PC-9 (cell line): ENCODE measurements at regions of chr2 and their contacts with region 1.

Region 1: DNA sequence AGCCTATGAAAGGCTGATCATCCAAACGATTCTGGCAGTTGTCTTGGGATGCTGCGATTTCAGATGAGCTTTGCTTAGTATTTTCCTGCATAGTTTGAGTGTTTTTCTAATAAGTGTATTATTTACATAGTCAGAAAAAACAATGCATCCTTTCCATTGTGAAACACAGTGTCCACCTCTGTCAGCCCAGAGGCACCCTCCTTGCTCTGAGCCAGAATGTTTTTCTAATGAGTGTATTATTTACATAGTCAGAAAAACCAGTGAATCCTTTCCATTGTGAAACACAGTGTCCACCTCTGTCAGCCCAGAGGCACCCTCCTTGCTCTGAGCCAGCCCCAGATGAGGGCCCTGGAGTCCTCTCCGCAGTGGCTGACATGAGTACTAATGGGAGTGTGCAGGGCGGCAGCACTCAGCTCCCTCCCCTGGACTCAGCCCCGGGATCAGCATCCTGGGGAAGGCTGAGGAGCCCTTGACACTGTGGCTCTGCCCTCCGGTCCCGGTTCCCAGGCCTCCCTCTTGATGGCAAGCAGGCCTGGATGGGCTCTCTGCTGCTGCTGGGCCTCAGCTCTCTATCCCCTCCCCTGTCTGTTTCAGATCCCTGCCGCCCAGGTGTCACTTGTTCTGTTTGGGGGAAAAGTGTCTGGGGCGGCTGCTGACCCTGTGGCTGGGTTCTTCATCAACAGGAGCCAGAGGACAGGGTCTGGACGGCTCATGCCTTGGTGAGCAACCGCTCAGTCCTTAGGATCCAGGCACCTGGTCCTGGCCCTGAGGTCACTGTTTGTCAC is 5.9 kb downstream of the MFSD2B start:
- DNase-seq: peak; percentile 84 to 99
- H3K4me3 ChIP-seq: no peak overlapping the region
- H3K27ac ChIP-seq: peak overlapping the region; percentile 55
- H3K4me1 ChIP-seq: peaks cover 45% of the 10 kb centered on the region
- H3K27me3 ChIP-seq: no peaks in the 10 kb centered on the region
- CTCF ChIP-seq: no peak

Region 2: DNA sequence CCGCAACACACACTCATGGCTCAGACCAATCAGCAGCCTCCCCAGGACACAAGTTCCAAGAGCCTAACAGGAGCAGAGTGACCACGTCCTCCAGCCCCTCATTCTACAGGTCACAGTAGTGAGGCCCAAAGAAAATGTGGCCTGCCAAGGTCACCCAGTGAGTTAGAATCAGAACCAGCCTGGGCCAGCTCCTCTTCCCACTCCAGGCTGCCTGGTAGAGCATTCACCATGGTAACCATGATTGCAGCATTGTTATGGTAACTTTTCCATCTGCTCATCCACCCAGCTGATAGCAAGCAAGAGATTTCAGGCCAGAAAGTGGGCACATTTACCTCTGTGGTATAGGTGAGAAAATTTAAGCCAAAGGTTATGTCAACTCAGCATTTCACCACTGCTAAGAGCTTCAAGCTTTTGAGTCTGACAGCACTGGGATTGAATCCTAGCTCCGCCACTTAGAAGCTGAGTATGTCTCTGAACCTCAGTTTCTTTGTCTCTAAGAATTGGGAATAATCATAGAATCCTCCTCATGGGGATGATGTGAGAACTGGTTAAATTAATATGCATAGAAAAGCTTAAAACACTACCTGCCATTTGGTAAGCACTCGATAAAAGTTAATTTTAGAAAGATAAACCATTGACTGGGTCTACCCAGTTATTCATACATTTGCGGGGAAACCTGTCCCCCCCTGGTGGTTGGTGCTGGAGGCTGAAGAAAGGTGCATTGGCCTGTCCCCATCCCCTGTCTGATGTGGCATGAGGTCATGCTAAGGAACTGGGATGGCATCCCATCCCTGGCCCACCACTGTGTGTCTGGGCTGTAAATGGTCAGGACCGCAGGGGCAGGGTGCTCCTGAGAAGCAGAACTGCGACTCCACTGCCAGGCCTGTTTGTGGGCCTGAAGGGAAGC is 449.3 kb before region 1 on chr2:
- CTCF ChIA-PET with region 1: no interaction called
- POLR2A ChIA-PET with region 1: no interaction called
- intact Hi-C with region 1: no loop called
- DNase-seq: peak in 1 of 2 experiments; percentile 26
- H3K4me3 ChIP-seq: no peak overlapping the region
- H3K27ac ChIP-seq: no peak overlapping the region
- H3K4me1 ChIP-seq: no peaks in the 10 kb centered on the region
- H3K27me3 ChIP-seq: no peaks in the 10 kb centered on the region
- CTCF ChIP-seq: peak; percentile 57

Region 3: DNA sequence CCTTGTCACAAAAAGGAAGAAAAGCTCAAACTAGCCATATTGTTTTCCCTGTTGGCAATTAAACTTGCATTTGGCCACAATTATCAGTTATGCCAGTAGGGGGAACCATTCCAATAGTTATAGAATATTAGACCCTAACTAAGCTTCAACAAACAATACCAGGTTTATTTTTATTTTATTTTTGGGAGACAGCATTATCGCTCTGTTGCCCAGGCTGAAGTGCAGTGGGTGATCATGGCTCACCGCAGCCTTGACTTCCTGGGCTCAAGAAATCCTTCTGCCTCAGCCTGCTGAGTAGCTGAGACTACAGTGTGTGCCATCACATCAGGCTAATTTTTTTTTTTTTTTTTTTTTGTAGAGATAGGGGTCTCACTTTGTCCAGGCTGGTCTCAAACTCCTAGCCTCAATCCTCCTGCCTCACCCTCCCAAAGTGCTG is 191.0 kb before region 1 on chr2:
- CTCF ChIA-PET with region 1: no interaction called
- POLR2A ChIA-PET with region 1: no interaction called
- intact Hi-C with region 1: loop called (anchors 1 kb)
- DNase-seq: peak; percentile 17 to 41
- H3K4me3 ChIP-seq: no peak overlapping the region
- H3K27ac ChIP-seq: no peak overlapping the region
- H3K4me1 ChIP-seq: peaks cover 18% of the 10 kb centered on the region
- H3K27me3 ChIP-seq: no peaks in the 10 kb centered on the region
- CTCF ChIP-seq: peak; percentile 88

Region 4: GRCh38 chr2:23939987-23940717 is 75.6 kb before region 1 on chr2 and contains the start of gene UBXN2A:
- CTCF ChIA-PET with region 1: no interaction called
- POLR2A ChIA-PET with region 1: no interaction called
- intact Hi-C with region 1: loop called (anchors 2 kb)
- DNase-seq: peak; percentile 49 to 81
- H3K4me3 ChIP-seq: peak within 1 kb of the TSS; percentile 80
- H3K27ac ChIP-seq: peak within 1 kb of the TSS; percentile 44
- H3K4me1 ChIP-seq: peaks cover 7% of the 10 kb centered on the region; the same call in 1 of the 2 replicates
- H3K27me3 ChIP-seq: no peaks in the 10 kb centered on the region
- CTCF ChIP-seq: no peak
- total RNA-seq, gene UBXN2A: 16.9 and 17.6 TPM in 2 replicates

Region 5: GRCh38 chr2:24111407-24111901 is 95.7 kb after region 1 on chr2:
- CTCF ChIA-PET with region 1: no interaction called
- POLR2A ChIA-PET with region 1: no interaction called
- intact Hi-C with region 1: no loop called
- DNase-seq: peak; percentile 49 to 87
- H3K4me3 ChIP-seq: no peak overlapping the region
- H3K27ac ChIP-seq: peak overlapping the region; percentile 92
- H3K4me1 ChIP-seq: peaks cover 45% of the 10 kb centered on the region
- H3K27me3 ChIP-seq: no peaks in the 10 kb centered on the region
- CTCF ChIP-seq: no peak

Region 6: DNA sequence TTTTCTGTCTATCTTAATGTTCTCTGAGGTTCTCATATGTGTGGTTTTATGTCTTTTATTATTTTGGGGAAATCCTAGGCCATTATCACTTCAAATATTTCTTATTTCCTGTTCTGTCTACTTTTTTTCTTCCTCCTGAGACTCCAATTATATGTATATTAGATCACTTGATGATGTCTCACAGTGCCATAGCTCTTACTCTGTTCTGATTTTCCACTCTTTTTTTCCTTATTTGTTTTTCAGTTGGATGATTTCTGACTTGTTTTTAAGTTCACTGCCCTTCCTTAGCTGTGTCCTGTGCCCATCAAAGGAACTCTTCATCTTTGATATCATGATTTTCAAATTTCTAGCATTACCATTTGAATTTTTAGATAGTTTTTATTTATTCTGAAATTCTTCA is 131.6 kb after region 1 on chr2:
- CTCF ChIA-PET with region 1: no interaction called
- POLR2A ChIA-PET with region 1: no interaction called
- intact Hi-C with region 1: no loop called
- DNase-seq: no peak
- H3K4me3 ChIP-seq: no peak overlapping the region
- H3K27ac ChIP-seq: no peak overlapping the region
- H3K4me1 ChIP-seq: no peaks in the 10 kb centered on the region
- H3K27me3 ChIP-seq: no peaks in the 10 kb centered on the region
- CTCF ChIP-seq: no peak